Heart right ventricle (tissue), 16 donors: ENCODE measurements at regions of chr6 and their contacts with region 1.

Region 1: DNA sequence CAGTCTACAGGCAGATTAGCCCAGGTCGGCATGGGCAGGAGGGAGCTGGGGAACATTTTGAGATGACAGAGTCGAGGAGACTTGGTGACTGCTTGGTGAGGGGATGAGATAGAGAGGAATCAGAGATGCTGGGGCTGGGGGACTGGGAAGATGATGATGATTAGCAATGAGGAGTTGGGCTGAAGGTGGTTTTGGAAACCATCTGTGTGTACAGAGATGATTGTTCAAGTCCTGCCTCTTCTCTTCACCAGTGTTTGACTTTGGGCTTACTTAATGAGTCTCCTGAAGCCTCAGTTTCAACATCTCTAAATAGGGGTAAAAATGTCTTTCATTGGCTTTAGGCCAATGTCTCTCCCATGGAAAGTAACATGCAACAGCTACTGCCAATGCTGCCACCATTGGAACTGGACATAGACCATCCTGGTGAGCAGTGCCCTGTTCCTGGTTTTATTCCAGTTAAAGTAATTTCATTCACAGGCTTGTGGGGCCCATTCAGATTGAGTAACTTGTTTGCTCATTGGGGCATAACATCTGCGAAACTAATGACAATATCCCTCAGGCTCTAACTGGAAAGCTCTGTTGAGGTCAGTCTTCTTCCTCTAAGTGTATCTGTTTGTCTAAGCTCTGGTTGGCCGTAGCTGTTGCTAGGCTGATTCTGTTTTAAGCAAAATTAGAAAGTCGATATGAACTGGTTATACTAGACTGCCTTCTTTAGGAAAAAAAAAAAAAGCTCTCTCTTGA is 99.1 kb downstream of the ARMC2 start:
- DNase-seq: peak in 1 of 2 donors; percentile 60
- ATAC-seq: peak in 7 of 8 donors; percentile 41 to 63 (median 52)
- H3K4me3 ChIP-seq: no peak overlapping the region
- H3K27ac ChIP-seq: peak overlapping the region; percentile 84 to 98 (median 92)
- H3K4me1 ChIP-seq: peaks cover 31 to 85% (median 69%) of the 10 kb centered on the region in 9 donors
- H3K27me3 ChIP-seq: no peaks in the 10 kb centered on the region
- CTCF ChIP-seq: peak in 1 of 9 donors; percentile 5

Region 2: DNA sequence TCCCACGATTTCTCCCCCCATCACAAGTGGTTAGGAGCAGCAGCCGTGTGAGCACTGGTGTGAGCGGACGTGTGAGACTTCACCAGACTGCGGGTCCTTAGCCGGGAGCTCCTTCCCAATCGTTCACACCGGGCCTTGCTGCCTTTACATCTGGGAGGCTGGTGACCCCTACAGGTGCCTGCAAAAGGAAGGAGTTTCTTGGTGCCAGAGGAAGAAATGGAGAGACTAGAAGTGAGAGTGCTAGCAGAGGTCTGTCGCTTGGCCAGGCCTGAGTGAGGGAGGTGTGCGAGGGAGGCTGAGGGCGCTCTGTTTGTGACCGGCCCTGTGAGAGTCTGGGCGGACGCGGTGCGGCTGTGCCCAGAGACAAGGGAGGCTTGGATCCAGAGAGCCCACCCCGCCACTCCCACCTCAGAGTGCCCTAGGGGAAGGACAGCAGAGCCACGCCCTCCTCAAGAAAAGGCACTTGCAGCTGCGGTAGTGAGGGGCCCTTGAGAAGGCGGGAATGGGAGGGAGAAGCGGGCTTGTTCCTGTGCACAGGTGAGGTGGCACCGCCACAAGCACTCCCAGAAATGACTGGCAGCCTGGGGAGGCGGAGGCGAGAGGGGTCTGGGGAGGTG is 109.1 kb before region 1 on chr6:
- intact Hi-C with region 1: no loop called
- DNase-seq: no peak
- ATAC-seq: peak in 1 of 8 donors; percentile 51
- H3K4me3 ChIP-seq: no peak overlapping the region
- H3K27ac ChIP-seq: peak overlapping the region in 4 of 10 donors; percentile 16 to 68 (median 33)
- H3K4me1 ChIP-seq: peaks cover 0 to 41% (median 0%) of the 10 kb centered on the region in 9 donors
- H3K27me3 ChIP-seq: no peaks in the 10 kb centered on the region
- CTCF ChIP-seq: no peak

Region 3: DNA sequence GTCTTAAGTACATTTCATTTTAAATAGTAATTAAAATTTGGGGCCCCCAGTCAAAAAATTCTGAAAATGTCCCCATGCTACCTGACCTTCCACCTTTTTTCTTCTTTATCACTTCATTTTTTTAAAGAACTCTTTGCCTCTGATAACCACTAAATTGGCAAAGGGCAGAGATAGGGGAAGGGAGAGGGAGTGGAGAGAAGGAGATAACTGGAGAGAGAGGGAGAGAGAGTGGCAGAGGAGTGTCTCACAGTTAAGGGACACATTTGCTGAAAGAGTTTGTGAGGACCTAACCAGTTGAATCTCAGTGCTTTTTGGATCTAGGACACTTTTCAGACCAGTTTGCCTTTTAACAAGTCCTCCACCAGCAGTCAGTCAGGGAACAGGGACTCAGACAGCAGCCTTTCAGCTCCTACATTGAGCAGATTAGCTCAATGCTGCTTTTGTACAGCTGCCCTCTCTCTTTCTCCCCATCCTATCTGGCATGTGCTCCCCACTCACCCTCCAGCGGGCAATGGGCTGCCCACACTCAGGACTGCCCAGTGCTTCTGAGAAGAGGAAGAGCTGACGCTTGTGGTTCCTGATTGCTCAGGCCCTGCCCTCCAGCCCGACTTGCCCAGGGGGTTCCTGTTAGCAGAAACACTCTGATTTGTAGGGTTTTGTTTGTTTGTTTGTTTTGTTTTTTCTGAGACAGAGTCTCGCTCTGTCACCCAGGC is 84.6 kb before region 1 on chr6:
- intact Hi-C with region 1: no loop called
- DNase-seq: peak in 1 of 2 donors; percentile 37
- ATAC-seq: peak; percentile 75 to 91 (median 86)
- H3K4me3 ChIP-seq: no peak overlapping the region
- H3K27ac ChIP-seq: peak overlapping the region in 6 of 10 donors; percentile 14 to 88 (median 50)
- H3K4me1 ChIP-seq: peaks cover 0 to 32% (median 4%) of the 10 kb centered on the region in 9 donors
- H3K27me3 ChIP-seq: no peaks in the 10 kb centered on the region
- CTCF ChIP-seq: no peak

Region 4: DNA sequence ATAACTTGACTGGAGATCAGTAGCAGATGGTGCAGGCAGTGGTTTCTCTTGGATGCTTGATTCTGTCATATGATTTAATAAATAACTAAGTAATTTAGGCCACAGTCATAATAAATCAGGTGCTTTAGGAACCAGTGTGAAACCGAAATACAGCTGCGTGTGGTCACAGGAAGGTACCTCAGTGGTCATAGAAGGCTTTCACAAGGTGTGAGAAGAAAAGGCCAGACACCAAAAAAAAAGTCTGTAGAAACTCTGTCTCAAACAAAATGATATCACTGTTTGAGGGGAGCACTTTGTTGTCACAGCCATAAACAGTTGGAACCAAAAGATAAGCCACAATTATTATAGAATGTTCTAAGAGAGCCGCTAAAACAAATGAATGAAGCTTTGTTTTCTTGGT is 42.5 kb before region 1 on chr6:
- intact Hi-C with region 1: loop called in 6 of 10 experiments (anchors 5 kb)
- DNase-seq: no peak
- ATAC-seq: no peak
- H3K4me3 ChIP-seq: no peak overlapping the region
- H3K27ac ChIP-seq: peak overlapping the region in 2 of 10 donors; percentile 49 to 78
- H3K4me1 ChIP-seq: peaks cover 0 to 46% (median 13%) of the 10 kb centered on the region in 9 donors
- H3K27me3 ChIP-seq: no peaks in the 10 kb centered on the region
- CTCF ChIP-seq: no peak

Region 5: DNA sequence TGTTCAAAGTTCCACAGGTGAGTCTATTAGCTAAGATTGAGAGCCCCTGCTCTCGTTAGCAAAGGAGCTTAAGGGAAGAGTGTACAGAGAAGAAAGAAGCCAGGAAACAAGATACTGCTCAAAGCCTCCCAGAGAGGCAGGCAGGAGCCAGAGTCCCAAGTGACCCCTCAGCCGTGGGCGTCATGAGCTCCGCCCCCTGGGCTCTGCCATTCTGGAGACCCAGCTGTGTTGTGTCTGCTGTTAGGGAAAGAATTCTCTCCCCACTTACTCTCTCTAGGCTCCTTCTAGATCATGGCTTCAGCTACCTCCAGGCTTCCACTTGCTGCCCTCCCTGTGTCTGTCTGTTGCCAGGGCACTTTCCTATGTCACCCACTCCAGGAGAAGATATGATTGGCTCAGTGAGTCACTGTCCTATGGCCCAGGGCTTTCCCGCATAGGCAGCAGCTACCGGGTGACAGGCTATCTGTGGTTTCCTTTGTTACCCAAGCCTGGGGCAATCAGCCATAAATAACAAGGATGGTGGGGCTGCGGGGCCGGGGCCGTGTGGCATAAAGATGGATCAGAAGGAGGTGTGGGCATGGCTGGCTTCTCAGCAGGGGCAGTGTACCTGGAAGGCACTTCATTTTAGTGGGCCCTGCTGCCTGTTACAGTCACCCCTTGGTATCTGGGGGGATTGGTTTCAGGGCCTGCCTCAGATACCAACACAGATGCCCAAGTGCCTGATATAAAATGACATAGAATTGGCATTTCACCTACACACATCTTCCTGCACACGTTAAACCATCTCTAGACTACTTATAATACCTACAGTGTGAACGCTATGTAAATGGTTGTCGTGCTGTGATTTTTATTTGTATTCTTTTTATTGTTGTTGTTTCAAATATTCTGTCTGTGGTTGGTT is 19.8 kb after region 1 on chr6:
- intact Hi-C with region 1: loop called in 1 of 10 experiments (anchors 2 kb)
- DNase-seq: peak; percentile 50 to 62
- ATAC-seq: peak; percentile 59 to 92 (median 68)
- H3K4me3 ChIP-seq: no peak overlapping the region
- H3K27ac ChIP-seq: peak overlapping the region; percentile 68 to 84 (median 75)
- H3K4me1 ChIP-seq: peaks cover 5 to 53% (median 37%) of the 10 kb centered on the region in 9 donors
- H3K27me3 ChIP-seq: no peaks in the 10 kb centered on the region
- CTCF ChIP-seq: no peak

Region 6: DNA sequence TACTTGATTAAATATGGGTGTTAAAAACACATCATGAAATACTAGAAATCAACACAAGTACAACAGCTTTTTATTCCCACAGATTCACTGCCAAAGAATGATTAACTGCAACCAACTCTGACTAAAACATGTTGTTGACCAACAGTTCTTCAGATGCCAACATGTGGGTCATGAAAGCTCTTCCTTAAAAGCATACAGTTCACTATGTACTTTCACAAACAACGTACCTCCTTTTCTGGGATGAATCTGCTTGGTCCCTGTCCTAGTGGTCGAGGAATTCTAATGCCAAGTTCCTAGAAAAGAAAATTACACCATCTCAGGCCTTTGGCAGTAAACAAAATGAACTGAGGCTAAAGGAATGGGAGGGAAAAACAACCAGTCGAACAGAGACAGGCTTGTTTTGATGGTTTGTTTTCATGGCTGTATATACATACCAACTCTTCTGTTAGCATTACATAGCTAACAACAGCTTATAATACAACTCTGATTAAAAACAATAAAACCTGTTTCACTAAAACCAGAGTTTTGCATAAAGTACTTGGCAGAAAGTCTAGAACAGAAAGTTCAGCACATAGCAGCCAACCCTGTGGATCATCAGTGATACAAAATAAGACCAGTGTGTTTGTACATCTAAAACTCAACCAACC is 54.9 kb after region 1 on chr6:
- intact Hi-C with region 1: loop called in 5 of 10 experiments (anchors 2 to 10 kb)
- DNase-seq: no peak
- ATAC-seq: peak; percentile 17 to 86 (median 35)
- H3K4me3 ChIP-seq: no peak overlapping the region
- H3K27ac ChIP-seq: peak overlapping the region; percentile 29 to 70 (median 59)
- H3K4me1 ChIP-seq: peaks cover 2 to 92% (median 77%) of the 10 kb centered on the region in 9 donors
- H3K27me3 ChIP-seq: no peaks in the 10 kb centered on the region
- CTCF ChIP-seq: no peak

Region 7: GRCh38 chr6:109009236-109009961 is 62.1 kb after region 1 on chr6:
- intact Hi-C with region 1: loop called in 6 of 10 experiments (anchors 2 to 10 kb)
- DNase-seq: peak; percentile 93 to 96
- ATAC-seq: peak; percentile 93 to 98 (median 96)
- H3K4me3 ChIP-seq: peak overlapping the region; percentile 67 to 98 (median 94)
- H3K27ac ChIP-seq: peak overlapping the region; percentile 91 to 98 (median 96)
- H3K4me1 ChIP-seq: peaks cover 0 to 74% (median 59%) of the 10 kb centered on the region in 9 donors
- H3K27me3 ChIP-seq: no peaks in the 10 kb centered on the region
- CTCF ChIP-seq: peak in 7 of 9 donors; percentile 11 to 52 (median 15)

Region 8: DNA sequence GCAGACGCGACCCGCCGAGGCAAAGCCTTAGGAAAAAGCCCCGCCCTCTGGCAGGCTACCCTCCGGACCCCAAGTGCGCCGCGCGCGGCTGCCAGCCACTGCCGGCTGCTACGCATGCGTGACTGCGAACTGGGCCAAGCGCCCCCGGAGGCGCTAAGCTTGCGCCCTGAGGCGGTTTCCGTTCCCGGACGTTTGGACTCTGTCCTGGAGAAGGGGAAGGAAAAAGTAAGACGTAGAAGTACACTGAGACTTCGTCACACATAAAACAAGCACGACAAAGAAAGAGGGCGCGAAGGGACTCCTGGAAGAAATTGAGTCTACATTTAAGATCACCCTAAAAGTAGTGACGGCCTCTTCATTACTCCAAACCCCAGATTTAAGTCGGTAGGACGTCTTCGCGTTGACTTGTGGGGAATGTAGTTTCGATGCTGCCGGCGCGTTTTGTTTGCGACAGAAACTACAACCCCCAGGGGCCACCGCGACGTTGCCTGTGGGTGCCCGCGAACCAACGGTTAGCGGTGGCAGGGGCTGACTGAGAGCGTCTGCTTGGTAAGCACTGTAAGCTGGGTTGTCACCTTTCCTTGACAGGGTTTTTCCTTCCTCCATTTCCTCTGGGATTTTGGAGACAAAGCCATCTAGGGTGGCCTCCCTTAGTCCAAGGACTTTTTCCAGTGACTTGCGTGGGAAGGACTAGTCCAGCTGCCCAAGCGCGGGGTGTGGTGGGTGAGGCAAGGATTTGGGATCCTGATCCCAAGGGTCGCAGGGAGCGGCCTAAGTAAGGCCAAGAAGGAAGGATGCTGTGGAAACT is 147.9 kb after region 1 on chr6 and contains the start of gene CEP57L1:
- intact Hi-C with region 1: loop called in 1 of 10 experiments (anchors 5 kb)
- DNase-seq: peak; percentile 98
- ATAC-seq: peak; percentile 71 to 94 (median 83)
- H3K4me3 ChIP-seq: peak within 1 kb of the TSS; percentile 59 to 98 (median 73)
- H3K27ac ChIP-seq: peak within 1 kb of the TSS; percentile 91 to 100 (median 99)
- H3K4me1 ChIP-seq: peaks cover 0 to 49% (median 38%) of the 10 kb centered on the region in 9 donors
- H3K27me3 ChIP-seq: no peaks in the 10 kb centered on the region
- CTCF ChIP-seq: peak in 2 of 9 donors; percentile 18 to 22
- total RNA-seq, gene CEP57L1: 6.0 to 11.4 (median 9.6) TPM